GM13977 (cell line): ENCODE measurements at regions of chrX and their contacts with region 1.

Region 1: GRCh38 chrX:41116948-41117347 is 31.7 kb downstream of the USP9X start:
- DNase-seq: peak; percentile 57
- CTCF ChIP-seq: no peak

Region 2: DNA sequence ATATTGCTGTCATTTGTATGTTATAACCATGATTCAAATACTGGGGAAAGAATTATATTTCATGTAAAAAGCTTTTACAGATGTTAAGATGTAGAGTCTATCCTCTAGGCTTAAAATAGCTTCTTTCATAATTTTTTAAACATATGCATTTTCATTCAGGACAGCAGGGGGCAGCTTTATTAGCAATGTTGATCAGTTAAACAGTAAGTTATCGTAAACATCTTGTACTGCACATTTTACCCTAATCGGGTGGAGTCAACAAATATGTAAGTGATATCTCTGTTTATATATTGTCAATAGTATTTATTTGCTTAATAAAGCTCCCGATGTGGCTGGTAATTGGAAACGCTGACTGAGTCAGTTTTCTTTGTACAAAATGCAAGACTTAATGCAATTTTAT is 239.1 kb before region 1 on chrX:
- in situ Hi-C with region 1: loop called (anchors 10 kb)
- DNase-seq: no peak
- CTCF ChIP-seq: peak; percentile 50

Region 3: DNA sequence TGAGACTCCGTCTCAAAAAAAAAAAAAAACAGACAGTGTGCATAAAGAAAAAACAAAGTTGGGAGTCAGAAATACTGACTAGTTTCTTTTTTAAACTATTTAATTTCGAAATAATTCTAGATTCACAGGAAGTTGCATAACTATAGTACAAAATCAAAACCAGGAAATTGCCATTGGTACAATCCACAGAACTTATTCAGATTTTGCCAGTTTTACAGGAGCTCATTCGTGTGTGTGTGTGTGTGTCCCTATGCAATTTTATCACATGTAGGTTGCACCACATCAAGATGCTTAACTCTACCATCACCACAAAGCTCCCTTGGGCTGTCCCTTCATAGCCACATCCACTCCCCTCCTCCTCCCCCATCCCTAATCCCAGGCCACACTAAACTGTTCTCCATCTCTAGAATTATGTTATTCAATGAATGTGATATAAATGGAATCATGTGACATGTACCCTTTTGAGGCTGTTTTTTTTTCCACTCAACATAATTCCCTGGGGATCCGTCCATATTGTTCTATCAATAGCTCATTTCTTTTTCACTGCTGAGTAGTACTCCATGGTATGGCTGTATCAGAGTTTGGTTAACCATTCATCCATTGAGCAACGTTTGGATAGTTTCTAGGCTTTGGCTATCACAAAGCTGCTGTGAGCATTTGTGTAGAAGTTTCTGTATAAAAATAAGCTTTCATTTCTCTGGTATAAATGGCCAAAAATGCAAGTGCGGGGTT is 200.7 kb after region 1 on chrX:
- in situ Hi-C with region 1: no loop called
- DNase-seq: no peak
- CTCF ChIP-seq: no peak

Region 4: DNA sequence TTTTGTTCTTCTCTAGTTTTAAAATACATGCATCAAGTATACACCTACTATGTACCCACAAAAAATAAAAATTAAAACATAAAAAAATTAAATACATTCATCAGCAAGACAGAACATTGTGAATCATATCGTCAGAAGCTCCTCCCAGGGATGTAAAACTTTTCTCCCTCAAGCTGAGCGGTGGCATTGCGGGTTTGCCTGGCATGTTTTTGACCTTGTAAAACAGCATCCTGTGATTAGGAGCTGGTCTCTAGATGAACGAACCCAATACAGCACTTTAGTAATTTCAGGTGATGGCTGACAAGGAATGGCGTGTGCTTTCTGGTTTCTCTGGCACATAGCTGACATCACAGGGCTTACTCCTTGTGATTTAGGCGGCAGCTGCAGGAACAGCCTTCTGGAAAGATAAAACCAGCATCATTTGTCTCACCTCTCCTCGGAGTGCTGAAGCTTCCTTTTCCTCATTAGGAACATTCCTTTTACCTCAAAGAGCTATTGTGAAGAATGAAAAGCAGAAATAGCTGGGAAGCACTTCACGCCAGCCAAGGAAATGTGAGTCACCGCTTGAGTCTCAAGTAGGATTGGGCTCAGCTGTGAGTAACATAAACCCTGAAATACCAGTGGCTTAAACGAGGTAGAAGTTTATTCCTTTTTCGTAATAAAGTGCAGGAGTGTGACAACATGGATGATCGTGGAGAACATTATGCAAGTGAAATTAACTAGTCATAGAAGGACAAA is 374.5 kb after region 1 on chrX:
- in situ Hi-C with region 1: no loop called
- DNase-seq: no peak
- CTCF ChIP-seq: no peak